GM18951 (cell line): ENCODE measurements at regions of chr2 and their contacts with region 1.

Region 1: DNA sequence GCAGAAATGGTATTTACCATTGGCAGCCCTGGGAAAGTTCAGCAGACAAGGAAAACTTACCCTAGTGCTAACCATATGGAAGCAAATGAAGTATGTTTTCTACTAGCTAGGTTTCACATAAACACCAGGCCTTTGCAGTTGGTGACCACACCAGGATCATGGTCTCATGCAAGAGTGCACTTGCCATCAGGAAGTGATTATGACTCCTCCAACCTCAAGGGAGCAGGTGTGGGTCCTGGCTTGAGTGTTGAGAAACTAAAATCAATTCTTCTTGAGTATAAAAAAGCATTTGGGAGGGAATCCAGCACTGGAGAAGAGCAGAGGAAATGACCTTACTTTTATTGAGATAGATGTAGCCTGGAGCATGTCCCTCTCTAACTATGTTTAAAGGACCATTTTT is 56.8 kb upstream of the SPAG16 start:
- POLR2A ChIP-seq: no peak

Region 2: DNA sequence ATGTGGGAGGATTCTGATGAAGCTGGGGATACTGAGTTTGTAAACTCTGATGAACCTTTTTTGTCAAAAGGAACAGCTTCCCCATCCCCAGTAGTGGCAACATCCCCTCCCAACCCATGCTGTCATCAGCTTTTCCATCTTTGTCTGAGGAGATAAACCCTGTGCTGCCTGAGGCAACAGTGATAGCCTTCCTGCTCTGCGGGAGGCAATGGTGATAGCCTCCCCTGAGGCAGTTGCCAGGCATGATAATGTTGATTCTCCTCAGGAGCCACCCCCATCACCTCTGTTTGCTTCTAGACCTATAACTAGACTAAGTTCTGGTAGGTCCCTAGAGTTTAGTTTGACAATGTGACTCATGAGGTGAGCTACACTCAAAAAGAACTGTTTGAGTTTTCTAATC is 786.3 kb before region 1 on chr2:
- in situ Hi-C with region 1: no loop called
- POLR2A ChIP-seq: no peak

Region 3: GRCh38 chr2:213021971-213022899 is 205.2 kb before region 1 on chr2:
- in situ Hi-C with region 1: loop called (anchors 5 kb)
- POLR2A ChIP-seq: peak; percentile 58

Region 4: GRCh38 chr2:213166109-213166508 is 61.3 kb before region 1 on chr2:
- in situ Hi-C with region 1: loop called (anchors 5 kb)
- POLR2A ChIP-seq: no peak